Motor neuron (in vitro differentiated cells): ENCODE measurements at regions of chr1 and their contacts with region 1.

Region 1: DNA sequence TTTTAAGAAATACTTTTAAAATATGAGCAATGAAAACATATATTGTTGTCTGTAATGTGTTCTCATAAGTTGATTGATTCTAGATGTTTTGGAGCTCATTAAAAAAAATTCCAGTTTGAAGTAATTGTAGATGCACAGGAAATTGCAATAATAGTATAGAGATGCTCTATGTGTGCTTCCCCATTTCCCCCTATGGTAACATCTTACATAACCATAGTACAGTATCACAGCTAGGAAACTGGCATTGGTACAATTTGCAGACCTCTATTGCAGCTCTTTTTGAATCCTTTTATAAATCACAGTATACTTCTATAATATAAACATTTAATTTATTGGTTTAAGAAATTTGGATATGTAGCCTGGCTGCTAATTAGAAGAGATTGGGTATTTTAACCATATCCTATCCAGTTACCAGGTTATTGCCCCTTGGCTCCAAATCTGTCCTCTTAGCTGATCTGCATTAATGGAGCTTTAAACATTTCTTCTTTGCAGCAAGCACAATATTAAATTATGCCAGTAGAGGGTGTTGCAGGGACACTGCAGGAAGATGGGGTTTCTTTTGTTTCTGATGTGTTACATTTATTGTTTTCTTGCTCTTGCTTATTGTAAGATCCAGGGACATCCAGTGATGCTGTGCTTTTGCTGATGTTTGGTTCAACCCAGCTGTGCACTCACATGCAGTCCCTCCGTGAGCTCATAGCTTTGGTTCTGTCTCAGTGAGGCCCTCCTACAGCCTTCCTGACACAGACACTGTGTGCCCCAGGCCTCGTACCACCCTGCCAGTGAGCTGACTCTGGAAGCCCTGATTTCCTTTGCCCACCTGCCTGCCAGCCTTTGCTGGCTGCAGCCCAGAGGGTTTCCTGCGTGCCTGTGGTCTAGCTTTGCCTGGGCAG is 103.3 kb downstream of the RABGAP1L start:
- ATAC-seq: peak; percentile 71 to 90 (median 76)
- H3K4me3 ChIP-seq: no peak overlapping the region
- H3K27ac ChIP-seq: no peak overlapping the region
- H3K4me1 ChIP-seq: peaks cover 0 to 2% of the 10 kb centered on the region in 2 donors

Region 2: DNA sequence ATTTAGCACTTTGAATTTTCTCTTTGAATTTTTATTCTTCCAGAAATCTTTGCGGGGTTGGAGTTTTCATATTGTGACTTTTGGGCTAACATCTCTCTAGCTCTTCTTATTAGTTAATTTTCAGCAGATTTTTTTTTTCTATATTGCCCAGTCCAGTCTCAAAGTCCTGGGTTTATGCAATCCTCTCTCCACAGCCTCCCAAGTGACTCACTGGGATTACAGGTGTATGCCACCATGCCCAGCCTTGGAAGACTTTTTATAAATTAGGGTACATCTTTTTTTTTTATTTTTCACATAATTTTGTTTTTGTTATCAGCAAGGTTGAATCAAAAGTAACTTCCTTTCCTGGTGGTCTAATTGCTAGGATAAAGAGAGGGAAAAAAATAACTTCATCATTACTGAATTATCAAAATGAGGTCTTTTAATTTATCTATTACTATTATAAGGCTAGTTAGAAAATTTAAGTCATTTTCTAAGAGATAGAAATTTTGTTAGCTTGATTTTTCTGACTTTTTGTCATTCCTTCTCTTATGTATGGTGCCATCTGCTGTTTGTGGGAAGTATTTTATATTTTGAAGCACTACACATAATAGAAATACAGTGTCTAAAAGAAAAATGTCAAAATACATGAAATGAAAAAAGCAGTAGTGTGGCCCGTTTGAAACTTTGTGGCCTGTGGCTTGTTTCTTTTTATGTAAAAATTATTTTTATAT is 463.7 kb after region 1 on chr1:
- in situ Hi-C with region 1: loop called in 6 of 9 experiments (anchors 5 to 25 kb)
- ATAC-seq: no peak
- H3K4me3 ChIP-seq: no peak overlapping the region
- H3K27ac ChIP-seq: no peak overlapping the region
- H3K4me1 ChIP-seq: no peaks in the 10 kb centered on the region

Region 3: GRCh38 chr1:174736831-174737230 is 474.2 kb after region 1 on chr1:
- in situ Hi-C with region 1: loop called in 6 of 9 experiments (anchors 5 to 25 kb)
- ATAC-seq: no peak
- H3K4me3 ChIP-seq: no peak overlapping the region
- H3K27ac ChIP-seq: no peak overlapping the region
- H3K4me1 ChIP-seq: no peaks in the 10 kb centered on the region

Region 4: DNA sequence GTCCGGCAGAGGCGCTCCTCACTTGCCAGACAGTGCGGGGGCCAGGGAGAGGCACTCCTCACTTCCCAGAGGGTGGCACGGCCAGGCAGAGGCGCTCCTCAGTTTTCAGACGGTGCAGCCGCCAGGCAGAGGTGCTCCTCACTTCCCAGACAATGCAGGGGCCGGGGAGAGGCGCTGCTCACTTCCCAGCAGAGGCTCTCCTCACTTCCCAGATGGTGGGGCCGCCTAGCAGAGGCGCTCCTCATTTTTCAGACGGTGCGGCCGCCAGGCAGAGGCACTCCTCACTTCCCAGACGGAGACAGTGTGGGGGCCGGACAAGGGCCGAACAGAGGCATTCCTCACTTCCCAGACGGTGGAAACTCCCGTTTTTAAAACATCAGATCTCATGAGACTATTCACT is 498.7 kb after region 1 on chr1:
- in situ Hi-C with region 1: no loop called
- ATAC-seq: peak in 1 of 8 experiments; percentile 16
- H3K4me3 ChIP-seq: no peak overlapping the region
- H3K27ac ChIP-seq: no peak overlapping the region
- H3K4me1 ChIP-seq: no peaks in the 10 kb centered on the region